MCF 10A (cell line): ENCODE measurements at regions of chr2 and their contacts with region 1.

Region 1: GRCh38 chr2:137677463-137677862 is 286.8 kb upstream of the HNMT start:
- DNase-seq: no peak
- H3K4me3 Mint-ChIP-seq: no peak overlapping the region
- H3K27ac Mint-ChIP-seq: no peak overlapping the region
- H3K4me1 Mint-ChIP-seq: no peaks in the 10 kb centered on the region
- H3K27me3 Mint-ChIP-seq: no peaks in the 10 kb centered on the region
- CTCF ChIP-seq: no peak

Region 2: GRCh38 chr2:136874258-136874657 is 803.2 kb before region 1 on chr2:
- CTCF ChIA-PET with region 1: no interaction called
- POLR2A ChIA-PET with region 1: no interaction called
- intact Hi-C with region 1: loop called (anchors 5 kb)
- DNase-seq: peak; percentile 55
- H3K4me3 Mint-ChIP-seq: no peak overlapping the region
- H3K27ac Mint-ChIP-seq: no peak overlapping the region
- H3K4me1 Mint-ChIP-seq: no peaks in the 10 kb centered on the region
- H3K27me3 Mint-ChIP-seq: peaks cover 19% of the 10 kb centered on the region
- CTCF ChIP-seq: peak; percentile 43

Region 3: GRCh38 chr2:137607722-137608318 is 69.6 kb before region 1 on chr2:
- CTCF ChIA-PET with region 1: no interaction called
- POLR2A ChIA-PET with region 1: no interaction called
- intact Hi-C with region 1: no loop called
- DNase-seq: no peak
- H3K4me3 Mint-ChIP-seq: no peak overlapping the region
- H3K27ac Mint-ChIP-seq: no peak overlapping the region
- H3K4me1 Mint-ChIP-seq: peaks cover 9% of the 10 kb centered on the region
- H3K27me3 Mint-ChIP-seq: no peaks in the 10 kb centered on the region
- CTCF ChIP-seq: no peak